Activated CD4-positive, alpha-beta memory T cell treated with anti-CD3 and anti-CD28 coated beads, Interleukin-2, amount 10 ng/mL, durations not matched to agents 7 days and 5 days (primary cell): ENCODE measurements at regions of chr12 and their contacts with region 1.

Region 1: DNA sequence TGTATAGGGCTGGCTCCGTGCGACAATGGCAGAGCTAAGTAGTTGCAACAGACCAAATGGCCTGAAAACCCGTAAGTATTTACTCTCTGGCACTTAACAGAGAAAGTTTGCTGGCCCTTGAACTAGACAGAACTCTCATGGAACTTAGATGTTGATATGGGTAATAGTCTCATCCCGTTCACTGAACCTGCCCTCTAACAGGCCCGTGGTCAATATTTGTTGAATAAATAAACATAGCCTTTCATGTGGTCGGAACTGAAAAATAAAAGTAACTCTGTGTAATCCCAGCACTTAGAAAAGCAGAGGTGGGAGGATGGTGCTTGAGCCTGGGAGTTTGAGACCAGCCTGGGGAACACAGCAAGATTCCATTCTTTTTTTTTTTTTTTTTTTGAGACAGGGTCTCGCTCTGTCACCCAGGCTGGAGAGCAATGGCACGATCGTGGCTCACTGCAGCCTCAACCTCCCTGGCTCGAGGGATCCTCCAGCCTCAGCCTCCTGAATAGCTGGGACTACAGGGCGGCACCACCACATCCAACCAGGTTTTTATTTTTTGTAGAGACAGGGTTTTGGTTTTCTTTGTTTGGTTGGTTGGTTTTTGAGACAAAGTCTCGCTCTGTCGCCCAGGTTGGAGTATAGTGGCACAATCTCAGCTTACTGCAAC is 29.7 kb downstream of the KDM2B start:
- DNase-seq: no peak
- H3K4me3 Mint-ChIP-seq: no peak overlapping the region
- H3K27ac Mint-ChIP-seq: no peak overlapping the region
- H3K4me1 Mint-ChIP-seq: peaks cover 12% of the 10 kb centered on the region
- H3K27me3 Mint-ChIP-seq: no peaks in the 10 kb centered on the region

Region 2: DNA sequence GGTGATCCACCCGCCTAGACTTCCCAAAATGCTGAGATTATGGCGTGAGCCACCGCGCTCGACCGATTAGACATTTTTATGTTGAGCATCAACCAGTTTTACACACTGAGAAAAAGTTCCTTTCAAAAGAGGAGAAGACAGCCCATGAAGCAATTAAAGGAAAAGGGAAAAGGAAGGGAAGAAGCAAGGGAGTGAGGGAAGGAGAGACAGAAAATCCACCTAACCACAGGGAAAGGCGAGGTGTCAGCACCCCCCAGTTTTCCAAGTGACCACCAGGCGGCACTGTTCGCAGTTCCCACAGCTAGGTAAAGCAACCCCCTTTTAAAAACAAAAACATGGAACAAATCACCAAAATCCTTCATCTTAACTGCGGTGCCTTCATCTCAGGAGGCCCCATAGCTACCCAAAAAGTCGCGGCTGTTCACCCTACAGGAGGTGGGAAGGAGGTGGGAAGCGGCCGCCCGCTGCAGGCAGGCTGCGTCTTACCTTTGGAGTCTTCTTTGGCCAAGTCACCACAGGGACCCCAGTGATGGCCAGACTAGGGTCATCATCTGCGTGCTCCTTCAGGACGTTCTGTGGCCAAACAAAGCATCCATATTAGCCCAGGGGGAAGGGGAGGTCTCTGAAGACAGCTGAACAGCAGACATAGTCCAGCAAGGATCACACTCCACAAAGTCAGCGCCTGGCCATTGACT is 56.9 kb before region 1 on chr12:
- CTCF ChIA-PET with region 1: interaction called, 13 read pairs
- POLR2A ChIA-PET with region 1: interaction called, 5 read pairs
- DNase-seq: peak; percentile 66
- H3K4me3 Mint-ChIP-seq: no peak overlapping the region
- H3K27ac Mint-ChIP-seq: no peak overlapping the region
- H3K4me1 Mint-ChIP-seq: peaks cover 12% of the 10 kb centered on the region
- H3K27me3 Mint-ChIP-seq: no peaks in the 10 kb centered on the region

Region 3: DNA sequence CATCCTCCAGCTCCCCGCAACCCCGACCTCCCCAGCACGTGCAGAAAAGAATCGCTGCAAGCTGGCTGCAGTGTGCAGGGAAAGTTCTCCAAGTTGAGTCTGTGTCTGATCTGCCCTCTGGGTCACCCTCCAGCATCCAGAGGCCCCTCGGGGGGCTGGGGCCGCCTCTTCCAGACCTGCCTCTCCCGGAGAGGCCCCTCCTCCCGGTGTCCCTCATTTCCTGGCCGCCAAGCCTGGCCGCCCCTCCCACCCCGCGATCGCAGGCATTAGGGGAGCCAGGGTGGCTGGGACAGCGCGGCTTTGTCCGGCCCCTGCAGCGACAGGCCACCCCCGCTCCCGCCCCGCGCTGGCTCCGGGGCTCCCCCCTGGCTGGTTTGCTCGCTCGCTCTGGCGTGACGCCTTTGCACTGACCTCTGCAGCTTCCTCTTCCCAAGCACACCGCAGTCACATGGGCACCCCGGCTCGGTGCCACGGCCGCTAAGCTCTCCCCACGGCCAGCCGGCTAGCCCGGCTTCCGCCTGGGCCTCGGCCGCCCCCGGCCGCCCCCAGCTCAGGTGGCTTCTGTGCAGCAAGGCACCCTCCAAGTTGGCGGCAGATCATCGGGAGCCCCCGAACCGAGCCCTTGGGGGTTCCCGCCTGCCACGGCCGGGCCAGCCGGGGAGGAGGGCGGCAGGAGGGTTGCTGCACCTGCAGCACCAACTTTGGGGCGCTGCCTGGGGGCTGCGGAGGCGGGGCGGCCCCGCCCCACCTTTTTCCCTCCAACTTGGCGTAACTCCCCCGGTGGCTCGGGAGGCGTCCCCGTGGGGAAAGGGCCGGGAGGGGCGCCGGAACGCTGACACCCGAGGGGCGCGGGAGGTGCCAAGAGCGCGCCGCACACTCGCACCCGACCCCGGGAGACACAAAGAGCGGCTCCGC is 13.9 kb before region 1 on chr12:
- CTCF ChIA-PET with region 1: interaction called, 12 read pairs
- POLR2A ChIA-PET with region 1: interaction called, 4 read pairs
- DNase-seq: peak; percentile 68
- H3K4me3 Mint-ChIP-seq: peak overlapping the region; percentile 74
- H3K27ac Mint-ChIP-seq: peak overlapping the region; percentile 63
- H3K4me1 Mint-ChIP-seq: peaks cover 54% of the 10 kb centered on the region
- H3K27me3 Mint-ChIP-seq: no peaks in the 10 kb centered on the region

Region 4: GRCh38 chr12:121637231-121637914 is 86.3 kb after region 1 on chr12:
- CTCF ChIA-PET with region 1: interaction called, 12 read pairs
- POLR2A ChIA-PET with region 1: interaction called, 5 read pairs
- DNase-seq: peak; percentile 74
- H3K4me3 Mint-ChIP-seq: peak overlapping the region; percentile 59
- H3K27ac Mint-ChIP-seq: peak overlapping the region; percentile 93
- H3K4me1 Mint-ChIP-seq: peaks cover 51% of the 10 kb centered on the region
- H3K27me3 Mint-ChIP-seq: no peaks in the 10 kb centered on the region

Region 5: GRCh38 chr12:121678716-121679580 is 127.8 kb after region 1 on chr12:
- CTCF ChIA-PET with region 1: interaction called, 26 read pairs
- POLR2A ChIA-PET with region 1: interaction called, 3 read pairs
- DNase-seq: no peak
- H3K4me3 Mint-ChIP-seq: no peak overlapping the region
- H3K27ac Mint-ChIP-seq: no peak overlapping the region
- H3K4me1 Mint-ChIP-seq: peaks cover 11% of the 10 kb centered on the region
- H3K27me3 Mint-ChIP-seq: no peaks in the 10 kb centered on the region

Region 6: GRCh38 chr12:121773011-121773777 is 222.1 kb after region 1 on chr12:
- CTCF ChIA-PET with region 1: interaction called, 10 read pairs
- POLR2A ChIA-PET with region 1: no interaction called
- DNase-seq: peak; percentile 86
- H3K4me3 Mint-ChIP-seq: no peak overlapping the region
- H3K27ac Mint-ChIP-seq: peak overlapping the region; percentile 64
- H3K4me1 Mint-ChIP-seq: peaks cover 16% of the 10 kb centered on the region
- H3K27me3 Mint-ChIP-seq: no peaks in the 10 kb centered on the region